Activated B cell treated with CpG ODN at 0.5 μM for 24 hours (primary cell): ENCODE measurements at regions of chr20 and their contacts with region 1.

Region 1: DNA sequence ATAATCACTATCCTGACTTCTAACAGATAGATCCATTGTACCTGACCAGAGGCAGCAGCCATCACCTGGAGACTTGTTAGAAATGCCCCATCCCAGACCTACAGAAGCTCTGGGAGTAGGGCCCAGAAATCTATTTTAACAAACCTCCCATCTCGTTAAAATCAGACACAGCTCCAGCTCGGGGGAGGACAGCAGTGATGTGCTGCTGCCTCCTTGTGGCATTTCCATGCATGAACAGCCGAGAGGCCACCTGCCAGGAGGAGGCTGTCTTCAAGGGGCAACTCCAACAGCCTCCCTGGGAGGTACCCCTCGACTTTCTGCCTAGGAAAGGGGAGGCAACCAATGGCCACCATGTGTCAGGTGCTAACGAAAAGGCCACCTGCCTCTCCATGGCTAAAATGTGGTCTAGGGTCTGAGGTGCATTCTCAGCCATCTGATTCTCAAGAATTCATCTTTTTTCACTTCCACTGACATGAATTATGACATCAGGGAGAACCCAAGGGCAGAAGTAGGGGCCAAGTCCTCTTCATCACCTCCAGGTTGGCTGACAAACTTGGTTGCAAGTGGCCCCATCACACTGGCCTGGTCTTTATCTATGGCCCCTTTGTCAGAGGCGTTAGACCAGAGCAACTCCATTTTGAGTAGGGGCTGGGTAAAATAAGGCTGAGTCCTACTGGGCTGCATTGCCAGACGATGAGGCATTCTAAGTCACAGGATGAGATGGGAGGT is 12.2 kb upstream of the KCNK15 start:
- DNase-seq: peak; percentile 27
- ATAC-seq: peak; percentile 74
- H3K4me3 Mint-ChIP-seq: no peak overlapping the region
- H3K27ac Mint-ChIP-seq: no peak overlapping the region
- H3K4me1 Mint-ChIP-seq: peaks cover 8% of the 10 kb centered on the region
- H3K27me3 Mint-ChIP-seq: no peaks in the 10 kb centered on the region
- CTCF ChIP-seq: no peak

Region 2: DNA sequence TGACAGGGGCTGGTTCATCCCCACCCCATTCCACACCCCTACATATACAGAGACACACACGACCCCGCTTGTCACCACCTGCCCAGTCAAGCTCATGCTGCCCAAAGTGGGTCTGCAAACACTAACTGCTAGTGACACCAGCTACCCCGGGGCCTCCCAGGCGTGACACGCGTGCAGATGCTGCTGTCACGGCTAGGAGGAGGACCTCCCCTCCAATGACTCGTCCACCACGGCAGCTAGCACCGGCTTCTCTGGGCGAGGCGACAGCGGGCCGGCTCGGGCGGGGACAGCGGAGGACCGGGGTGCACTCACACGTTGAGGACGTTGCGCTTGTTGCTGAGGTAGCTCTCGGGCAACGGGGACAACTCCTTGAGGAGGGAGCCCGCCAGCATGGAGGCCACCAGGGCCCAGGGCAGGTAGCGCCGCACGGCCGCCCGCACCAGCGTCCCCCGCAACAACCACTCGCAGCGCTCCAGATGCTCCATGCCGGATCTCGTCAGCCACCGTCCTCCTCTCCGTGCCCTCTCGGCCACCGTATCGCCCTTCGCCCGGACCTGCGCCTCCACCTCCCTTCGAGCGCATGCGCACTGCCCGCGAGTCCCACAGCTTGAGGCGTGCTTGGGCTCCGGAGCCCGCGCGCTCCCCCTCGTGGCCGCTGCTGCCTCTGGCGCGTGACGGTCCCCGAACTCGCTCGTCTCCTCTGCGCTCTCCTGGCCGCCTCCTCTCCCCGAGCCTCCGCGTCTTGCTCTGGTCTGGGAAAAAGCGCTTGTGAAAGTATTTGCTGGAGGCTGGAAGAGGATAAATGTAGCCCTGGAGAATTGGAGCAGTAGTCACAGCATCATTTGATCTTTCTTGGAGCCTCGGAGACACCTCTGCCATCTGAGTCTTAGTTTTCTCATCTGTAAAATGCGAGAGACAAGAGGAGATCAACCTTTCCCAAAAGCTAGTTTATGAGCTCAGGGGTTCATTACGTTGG is 422.6 kb before region 1 on chr20 and contains the start of gene FITM2:
- CTCF ChIA-PET with region 1: no interaction called
- POLR2A ChIA-PET with region 1: no interaction called
- intact Hi-C with region 1: loop called (anchors 1 kb)
- DNase-seq: peak; percentile 99
- ATAC-seq: peak; percentile 97
- H3K4me3 Mint-ChIP-seq: peak within 1 kb of the TSS; percentile 91
- H3K27ac Mint-ChIP-seq: peak within 1 kb of the TSS; percentile 85
- H3K4me1 Mint-ChIP-seq: peaks cover 19% of the 10 kb centered on the region
- H3K27me3 Mint-ChIP-seq: peaks cover 3% of the 10 kb centered on the region
- CTCF ChIP-seq: no peak
- total RNA-seq, gene FITM2: 2.4 and 3.3 TPM in 2 replicates

Region 3: GRCh38 chr20:44615169-44615791 is 118.2 kb before region 1 on chr20:
- CTCF ChIA-PET with region 1: interaction called, 4 read pairs
- POLR2A ChIA-PET with region 1: interaction called, 5 read pairs
- intact Hi-C with region 1: loop called (anchors 5 kb)
- DNase-seq: no peak
- ATAC-seq: peak; percentile 41
- H3K4me3 Mint-ChIP-seq: no peak overlapping the region
- H3K27ac Mint-ChIP-seq: peak overlapping the region; percentile 80
- H3K4me1 Mint-ChIP-seq: peaks cover 69% of the 10 kb centered on the region
- H3K27me3 Mint-ChIP-seq: no peaks in the 10 kb centered on the region
- CTCF ChIP-seq: no peak

Region 4: GRCh38 chr20:44683263-44684046 is 50.0 kb before region 1 on chr20:
- CTCF ChIA-PET with region 1: interaction called, 11 read pairs
- POLR2A ChIA-PET with region 1: no interaction called
- intact Hi-C with region 1: loop called (anchors 1 kb)
- DNase-seq: no peak
- ATAC-seq: peak; percentile 37
- H3K4me3 Mint-ChIP-seq: no peak overlapping the region
- H3K27ac Mint-ChIP-seq: no peak overlapping the region
- H3K4me1 Mint-ChIP-seq: peaks cover 2% of the 10 kb centered on the region
- H3K27me3 Mint-ChIP-seq: peaks cover 6% of the 10 kb centered on the region
- CTCF ChIP-seq: no peak

Region 5: DNA sequence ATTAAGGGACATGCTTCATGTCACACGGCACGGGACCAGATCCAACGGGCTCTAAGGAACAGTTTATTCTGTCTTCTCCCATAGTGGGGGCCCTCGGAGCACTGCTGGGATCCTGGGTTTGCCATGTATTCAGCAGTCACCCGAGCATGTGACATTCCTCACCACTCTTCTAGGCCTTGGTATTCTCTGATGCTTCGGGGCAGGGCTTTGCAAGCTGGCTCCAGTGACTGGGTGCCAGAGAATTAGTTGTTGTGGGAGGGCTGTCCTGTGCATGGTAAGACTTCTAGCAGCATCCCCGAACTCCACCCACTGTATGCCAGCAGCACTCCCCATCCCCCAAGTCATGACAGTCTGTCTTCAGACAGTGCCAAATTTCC is 12.9 kb before region 1 on chr20:
- CTCF ChIA-PET with region 1: no interaction called
- POLR2A ChIA-PET with region 1: no interaction called
- intact Hi-C with region 1: no loop called
- DNase-seq: no peak
- ATAC-seq: no peak
- H3K4me3 Mint-ChIP-seq: no peak overlapping the region
- H3K27ac Mint-ChIP-seq: no peak overlapping the region
- H3K4me1 Mint-ChIP-seq: no peaks in the 10 kb centered on the region
- H3K27me3 Mint-ChIP-seq: no peaks in the 10 kb centered on the region
- CTCF ChIP-seq: no peak

Region 6: GRCh38 chr20:44883214-44883902 is 149.9 kb after region 1 on chr20:
- CTCF ChIA-PET with region 1: no interaction called
- POLR2A ChIA-PET with region 1: no interaction called
- intact Hi-C with region 1: no loop called
- DNase-seq: no peak
- ATAC-seq: no peak
- H3K4me3 Mint-ChIP-seq: no peak overlapping the region
- H3K27ac Mint-ChIP-seq: no peak overlapping the region
- H3K4me1 Mint-ChIP-seq: peaks cover 40% of the 10 kb centered on the region
- H3K27me3 Mint-ChIP-seq: no peaks in the 10 kb centered on the region
- CTCF ChIP-seq: no peak